ENCODE measurements at regions of chr5 and their contacts with region 1.

Region 1: GRCh38 chr5:163505368-163506094 is at the start of gene MAT2B:
- DNase-seq: peak; percentile 97
- H3K4me3 ChIP-seq: peak within 1 kb of the TSS; percentile 59 to 98 (median 72)
- H3K27ac ChIP-seq: peak within 1 kb of the TSS; percentile 70
- H3K4me1 ChIP-seq: peaks cover 37% of the 10 kb centered on the region
- H3K27me3 ChIP-seq: no peaks in the 10 kb centered on the region
- CTCF ChIP-seq: peak; percentile 52 to 68
- POLR2A ChIP-seq: peak; percentile 93
- total RNA-seq, gene MAT2B: 93.1 and 101 TPM in 2 replicates

Region 2: DNA sequence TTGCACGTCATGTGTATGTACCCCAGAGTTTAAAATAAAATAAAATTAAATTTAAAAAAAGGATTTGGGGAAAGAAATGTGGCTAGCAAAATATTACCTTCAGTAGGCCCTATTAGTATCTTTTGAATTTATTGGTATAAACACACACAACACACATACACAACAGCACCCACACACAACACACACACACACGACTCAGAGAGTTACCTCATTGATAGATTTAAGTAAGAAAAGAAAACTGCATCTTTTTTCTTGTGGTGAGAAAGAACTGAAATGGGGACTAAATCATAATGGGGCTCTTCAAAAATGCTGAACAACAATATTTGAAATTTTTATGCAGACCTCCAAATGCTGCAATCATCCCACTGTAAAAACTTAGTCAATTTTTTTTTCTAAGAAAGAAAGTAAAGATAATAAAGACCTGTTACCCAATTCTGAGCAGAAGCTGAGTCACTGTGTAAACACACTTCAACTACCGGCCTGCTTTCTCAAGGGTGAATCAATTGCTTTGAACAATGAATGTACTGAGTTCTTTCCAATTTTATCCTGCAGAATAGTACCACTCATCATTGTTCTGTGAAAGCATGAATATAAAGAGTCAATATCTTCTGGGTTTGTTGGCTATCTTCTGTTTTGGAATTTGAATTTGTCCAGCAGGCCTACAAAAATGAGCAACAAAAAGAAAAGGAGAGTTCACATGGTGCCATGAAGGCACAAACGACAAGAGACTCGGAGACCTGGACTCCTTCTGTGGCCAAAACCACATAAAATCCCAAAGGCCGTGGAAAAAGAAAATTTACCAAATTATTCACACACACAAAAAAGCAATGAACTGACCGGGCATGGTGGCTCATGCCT is 126.0 kb before region 1 on chr5:
- CTCF ChIA-PET with region 1: no interaction called
- POLR2A ChIA-PET with region 1: no interaction called
- dilution Hi-C with region 1: no loop called
- intact Hi-C with region 1: no loop called
- DNase-seq: peak; percentile 14
- H3K4me3 ChIP-seq: no peak overlapping the region
- H3K27ac ChIP-seq: no peak overlapping the region
- H3K4me1 ChIP-seq: no peaks in the 10 kb centered on the region
- H3K27me3 ChIP-seq: no peaks in the 10 kb centered on the region
- CTCF ChIP-seq: no peak
- POLR2A ChIP-seq: no peak

Region 3: DNA sequence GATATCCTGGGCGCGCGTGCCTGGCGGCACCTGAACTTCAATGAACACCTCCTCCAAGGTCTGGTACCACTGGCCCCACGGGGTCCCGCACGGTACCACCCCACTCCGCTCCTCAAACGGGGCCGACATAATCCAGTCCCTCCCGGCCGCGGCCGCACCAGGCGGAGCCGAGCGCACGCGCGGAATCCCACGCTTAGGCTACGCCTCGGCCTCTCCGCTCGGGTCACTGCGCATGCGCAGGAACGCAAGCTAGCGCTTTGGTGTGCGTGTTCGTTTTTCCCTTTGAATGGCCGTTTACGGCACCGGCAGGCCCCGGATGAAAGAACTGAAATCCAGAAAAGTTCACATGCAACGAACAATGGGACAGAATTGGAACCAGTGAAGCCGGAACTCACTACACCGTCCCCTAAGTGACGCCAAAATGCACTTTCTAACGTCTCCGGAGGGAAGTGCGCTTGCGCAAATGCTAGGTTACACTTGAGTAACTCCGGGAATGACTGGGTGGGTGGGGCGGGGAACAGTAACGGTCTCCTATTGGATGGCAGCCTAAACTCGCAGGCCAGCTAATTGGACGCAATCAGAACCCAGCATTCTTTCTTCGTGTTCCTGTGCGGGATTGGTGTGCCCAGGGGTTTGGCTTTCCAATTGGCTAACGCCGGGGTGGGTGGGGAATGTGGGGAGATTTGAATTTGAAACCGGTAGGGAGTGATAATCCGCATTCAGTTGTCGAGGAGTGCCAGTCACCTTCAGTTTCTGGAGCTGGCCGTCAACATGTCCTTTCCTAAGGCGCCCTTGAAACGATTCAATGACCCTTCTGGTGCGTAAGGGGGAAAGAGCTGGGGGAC is 45.4 kb before region 1 on chr5 and contains the starts of genes HMMR and NUDCD2:
- CTCF ChIA-PET with region 1: interaction called, 15 read pairs
- POLR2A ChIA-PET with region 1: interaction called, 15 read pairs
- dilution Hi-C with region 1: no loop called
- intact Hi-C with region 1: loop called (anchors 1 kb)
- DNase-seq: peak; percentile 99
- H3K4me3 ChIP-seq: peak within 1 kb of the TSS; percentile 85 to 96 (median 92)
- H3K27ac ChIP-seq: peak within 1 kb of the TSS; percentile 99
- H3K4me1 ChIP-seq: peaks cover 21% of the 10 kb centered on the region
- H3K27me3 ChIP-seq: no peaks in the 10 kb centered on the region
- CTCF ChIP-seq: peak in 1 of 2 donors; percentile 11
- POLR2A ChIP-seq: peak; percentile 95
- total RNA-seq, gene HMMR: 26.0 and 31.0 TPM in 2 replicates
- total RNA-seq, gene NUDCD2: 46.9 and 50.3 TPM in 2 replicates

Region 4: GRCh38 chr5:163489055-163489744 is 16.3 kb before region 1 on chr5:
- CTCF ChIA-PET with region 1: interaction called, 13 read pairs
- POLR2A ChIA-PET with region 1: no interaction called
- dilution Hi-C with region 1: no loop called
- intact Hi-C with region 1: no loop called
- DNase-seq: no peak
- H3K4me3 ChIP-seq: no peak overlapping the region
- H3K27ac ChIP-seq: no peak overlapping the region
- H3K4me1 ChIP-seq: no peaks in the 10 kb centered on the region
- H3K27me3 ChIP-seq: no peaks in the 10 kb centered on the region
- CTCF ChIP-seq: peak in 1 of 2 donors; percentile 26
- POLR2A ChIP-seq: no peak

Region 5: DNA sequence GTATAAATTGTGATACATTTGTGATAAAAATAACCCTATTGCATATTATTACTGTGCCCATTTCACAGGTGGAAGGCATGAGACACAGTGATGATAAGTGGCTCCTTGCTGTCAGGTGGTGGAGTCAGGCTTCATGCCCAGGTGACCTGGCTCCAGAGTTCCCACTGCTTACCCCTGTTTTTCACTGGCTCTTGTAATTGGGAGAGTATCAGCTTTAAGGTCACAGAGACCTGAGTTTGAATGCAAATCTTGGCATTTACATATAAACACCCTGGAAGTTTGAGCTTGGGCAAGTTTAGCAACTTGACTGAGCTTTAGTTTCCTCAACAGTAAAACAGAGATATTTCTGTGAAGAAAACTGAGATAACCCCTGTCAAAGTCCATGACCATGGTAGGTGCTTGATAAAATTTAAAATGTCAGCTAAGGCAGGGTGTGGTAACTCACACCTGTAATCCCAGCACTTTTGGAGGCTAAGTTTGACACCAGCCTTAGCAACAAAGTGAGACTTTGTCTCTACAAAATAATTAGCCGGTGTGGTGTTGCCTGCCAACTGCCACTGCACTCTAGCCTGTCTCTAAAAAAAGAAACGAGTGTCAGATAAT is 29.1 kb after region 1 on chr5:
- CTCF ChIA-PET with region 1: no interaction called
- POLR2A ChIA-PET with region 1: no interaction called
- dilution Hi-C with region 1: no loop called
- intact Hi-C with region 1: no loop called
- DNase-seq: no peak
- H3K4me3 ChIP-seq: no peak overlapping the region
- H3K27ac ChIP-seq: no peak overlapping the region
- H3K4me1 ChIP-seq: no peaks in the 10 kb centered on the region
- H3K27me3 ChIP-seq: peaks cover 2 to 9% of the 10 kb centered on the region in 2 experiments
- CTCF ChIP-seq: no peak
- POLR2A ChIP-seq: no peak

Region 6: DNA sequence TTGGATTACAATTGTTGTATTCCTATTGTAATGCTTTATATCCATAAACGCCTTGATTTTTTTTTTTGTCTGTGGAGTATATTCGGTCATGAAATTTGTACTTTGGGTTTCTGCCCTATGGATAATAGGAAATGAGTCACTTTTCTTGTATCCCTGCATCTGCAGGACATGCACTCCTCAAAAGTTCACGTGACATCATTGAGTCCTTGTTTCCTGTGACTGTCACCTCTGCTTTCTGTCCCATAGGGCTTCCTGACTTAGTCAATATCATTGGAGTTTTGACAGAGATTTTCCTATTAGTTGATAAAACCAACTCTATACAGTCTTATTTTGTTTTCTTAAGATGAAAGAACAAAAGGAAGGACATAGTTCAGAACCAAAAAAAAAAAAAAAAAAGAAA is 356.1 kb after region 1 on chr5:
- CTCF ChIA-PET with region 1: no interaction called
- POLR2A ChIA-PET with region 1: no interaction called
- dilution Hi-C with region 1: no loop called
- intact Hi-C with region 1: loop called (anchors 2 kb)
- DNase-seq: peak; percentile 91
- H3K4me3 ChIP-seq: no peak overlapping the region
- H3K27ac ChIP-seq: peak overlapping the region; percentile 84
- H3K4me1 ChIP-seq: peaks cover 41% of the 10 kb centered on the region
- H3K27me3 ChIP-seq: no peaks in the 10 kb centered on the region
- CTCF ChIP-seq: no peak
- POLR2A ChIP-seq: no peak

Region 7: DNA sequence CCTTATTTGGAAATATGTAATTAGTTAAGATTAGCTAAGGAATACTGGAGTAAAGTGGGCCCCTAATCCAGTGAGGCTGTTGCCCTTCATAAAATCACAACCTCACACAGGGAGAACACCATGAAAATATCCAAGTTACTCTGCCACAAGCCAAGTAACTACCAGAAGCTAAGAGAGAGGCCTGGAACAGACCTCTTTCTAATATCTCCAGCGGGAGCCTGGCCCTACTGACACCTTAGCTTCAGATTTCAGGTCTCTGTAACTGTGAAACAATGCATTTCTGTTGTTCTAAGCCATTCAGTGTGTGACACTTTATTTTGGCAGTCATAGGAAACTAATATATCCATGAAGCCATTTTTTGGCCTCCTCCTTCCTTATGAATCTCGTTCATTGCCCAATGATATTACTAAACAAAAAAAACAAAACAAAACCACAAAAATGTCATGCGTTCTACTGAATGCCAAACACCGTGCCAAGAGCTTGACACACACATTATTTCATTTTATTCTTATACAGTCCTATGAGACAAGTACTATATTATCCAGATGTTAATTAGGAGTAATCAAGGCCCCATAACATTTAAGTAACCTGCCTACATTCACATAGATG is 698.9 kb after region 1 on chr5:
- CTCF ChIA-PET with region 1: no interaction called
- POLR2A ChIA-PET with region 1: no interaction called
- dilution Hi-C with region 1: no loop called
- intact Hi-C with region 1: loop called (anchors 5 kb)
- DNase-seq: peak; percentile 50
- H3K4me3 ChIP-seq: no peak overlapping the region
- H3K27ac ChIP-seq: peak overlapping the region; percentile 87
- H3K4me1 ChIP-seq: peaks cover 28% of the 10 kb centered on the region
- H3K27me3 ChIP-seq: no peaks in the 10 kb centered on the region
- CTCF ChIP-seq: no peak
- POLR2A ChIP-seq: no peak